ENCODE measurements at regions of chr15 and their contacts with region 1.

Region 1: DNA sequence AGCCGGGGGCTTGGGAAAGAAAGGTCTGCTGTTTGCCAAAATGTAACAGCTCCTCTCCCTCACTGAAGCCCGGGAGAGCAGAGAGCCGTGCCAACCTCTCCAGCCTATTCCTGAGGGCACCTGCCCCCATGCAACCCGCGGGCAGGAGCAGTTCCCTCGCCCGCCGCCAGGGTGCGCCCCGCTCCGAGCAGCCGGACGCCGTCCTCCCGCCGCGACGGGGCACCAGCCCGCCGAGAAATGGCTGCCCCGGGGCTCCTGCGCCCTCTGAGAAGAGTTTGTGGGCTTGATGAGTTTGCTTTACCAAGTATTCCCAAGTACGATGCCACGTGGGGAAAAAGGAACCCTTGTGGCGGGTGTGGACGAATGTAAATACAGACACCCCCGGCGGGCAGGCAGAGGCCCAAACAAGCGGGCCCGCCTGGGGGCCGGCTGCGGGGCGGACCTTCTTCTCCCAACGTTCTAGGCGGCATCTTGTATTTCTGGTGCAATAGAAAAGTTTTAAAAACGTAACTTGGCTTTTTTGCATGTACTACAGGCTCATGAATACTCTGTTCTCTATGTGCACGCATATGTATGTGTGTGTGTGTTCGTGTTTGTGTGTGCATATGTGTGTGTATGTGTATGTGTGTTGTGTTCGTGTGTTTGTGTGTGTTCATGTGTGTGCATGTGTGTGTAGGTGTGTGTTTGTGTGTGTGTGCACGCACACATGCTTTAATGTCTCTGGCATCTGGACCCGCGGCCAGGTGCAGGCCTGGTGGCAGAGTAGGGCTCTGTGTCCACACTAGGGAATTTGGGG is 162.9 kb downstream of the CHSY1 start:
- DNase-seq: peak; percentile 78 to 87
- ATAC-seq: peak; percentile 81 to 96 (median 91)
- H3K4me3 ChIP-seq: peak overlapping the region; percentile 48
- H3K27ac ChIP-seq: no peak overlapping the region
- H3K4me1 ChIP-seq: peaks cover 11% of the 10 kb centered on the region
- H3K27me3 ChIP-seq: no peaks in the 10 kb centered on the region
- CTCF ChIP-seq: peak; percentile 100

Region 2: GRCh38 chr15:101014921-101015841 is 73.8 kb before region 1 on chr15:
- intact Hi-C with region 1: loop called (anchors 5 kb)
- DNase-seq: peak; percentile 69 to 82
- ATAC-seq: peak; percentile 70 to 91 (median 76)
- H3K4me3 ChIP-seq: no peak overlapping the region
- H3K27ac ChIP-seq: no peak overlapping the region
- H3K4me1 ChIP-seq: no peaks in the 10 kb centered on the region
- H3K27me3 ChIP-seq: no peaks in the 10 kb centered on the region
- CTCF ChIP-seq: peak; percentile 82

Region 3: GRCh38 chr15:101062471-101063171 is 26.4 kb before region 1 on chr15:
- intact Hi-C with region 1: no loop called
- DNase-seq: no peak
- ATAC-seq: no peak
- H3K4me3 ChIP-seq: no peak overlapping the region
- H3K27ac ChIP-seq: no peak overlapping the region
- H3K4me1 ChIP-seq: no peaks in the 10 kb centered on the region
- H3K27me3 ChIP-seq: no peaks in the 10 kb centered on the region
- CTCF ChIP-seq: no peak

Measured in psoas muscle (tissue), 8 donors.